ENCODE measurements at regions of chr1 and their contacts with region 1.

Region 1: DNA sequence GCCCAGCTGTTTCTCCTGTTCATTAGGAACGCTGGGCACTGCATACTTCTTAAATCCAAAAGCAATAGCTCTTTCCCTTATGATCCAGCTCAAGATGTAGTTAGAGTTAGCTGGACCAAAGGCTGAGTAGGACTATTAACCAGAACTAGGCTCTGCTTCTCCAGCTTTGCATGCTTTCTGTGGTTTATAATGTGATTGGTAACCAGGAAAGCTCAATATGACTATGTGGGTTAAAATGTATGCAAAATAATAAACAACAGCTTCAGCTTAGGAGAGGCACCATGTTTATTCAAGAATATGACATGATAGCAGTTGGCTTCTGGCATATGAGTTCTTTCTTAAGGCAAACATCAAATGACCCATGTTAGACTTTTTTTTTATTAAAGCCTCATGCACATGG is 73.8 kb downstream of the LYPLAL1 start:
- DNase-seq: no peak
- H3K4me3 Mint-ChIP-seq: no peak overlapping the region
- H3K27ac Mint-ChIP-seq: no peak overlapping the region
- H3K4me1 Mint-ChIP-seq: no peaks in the 10 kb centered on the region
- H3K27me3 Mint-ChIP-seq: no peaks in the 10 kb centered on the region
- CTCF ChIP-seq: no peak

Region 2: GRCh38 chr1:219144658-219145315 is 102.7 kb before region 1 on chr1:
- CTCF ChIA-PET with region 1: no interaction called
- POLR2A ChIA-PET with region 1: no interaction called
- intact Hi-C with region 1: loop called (anchors 5 kb)
- DNase-seq: no peak
- H3K4me3 Mint-ChIP-seq: no peak overlapping the region
- H3K27ac Mint-ChIP-seq: no peak overlapping the region
- H3K4me1 Mint-ChIP-seq: no peaks in the 10 kb centered on the region
- H3K27me3 Mint-ChIP-seq: no peaks in the 10 kb centered on the region
- CTCF ChIP-seq: no peak

Region 3: GRCh38 chr1:219416594-219417238 is 169.3 kb after region 1 on chr1:
- CTCF ChIA-PET with region 1: no interaction called
- POLR2A ChIA-PET with region 1: no interaction called
- intact Hi-C with region 1: no loop called
- DNase-seq: peak; percentile 85
- H3K4me3 Mint-ChIP-seq: no peak overlapping the region
- H3K27ac Mint-ChIP-seq: no peak overlapping the region
- H3K4me1 Mint-ChIP-seq: no peaks in the 10 kb centered on the region
- H3K27me3 Mint-ChIP-seq: peaks cover 83% of the 10 kb centered on the region
- CTCF ChIP-seq: peak; percentile 92

Region 4: GRCh38 chr1:220137019-220137786 is 889.8 kb after region 1 on chr1:
- CTCF ChIA-PET with region 1: no interaction called
- POLR2A ChIA-PET with region 1: no interaction called
- intact Hi-C with region 1: no loop called
- DNase-seq: no peak
- H3K4me3 Mint-ChIP-seq: no peak overlapping the region
- H3K27ac Mint-ChIP-seq: peak overlapping the region; percentile 49
- H3K4me1 Mint-ChIP-seq: no peaks in the 10 kb centered on the region
- H3K27me3 Mint-ChIP-seq: no peaks in the 10 kb centered on the region
- CTCF ChIP-seq: no peak